Heart right ventricle (tissue), 16 donors: ENCODE measurements at regions of chr2 and their contacts with region 1.

Region 1: GRCh38 chr2:13006829-13007717 is 290.3 kb downstream of the TRIB2 start:
- DNase-seq: peak; percentile 25 to 79
- ATAC-seq: peak; percentile 91 to 95 (median 92)
- H3K4me3 ChIP-seq: peak overlapping the region in 7 of 10 donors; percentile 4 to 39 (median 34)
- H3K27ac ChIP-seq: peak overlapping the region in 9 of 10 donors; percentile 11 to 66 (median 42)
- H3K4me1 ChIP-seq: peaks cover 2 to 38% (median 21%) of the 10 kb centered on the region in 9 donors
- H3K27me3 ChIP-seq: no peaks in the 10 kb centered on the region
- CTCF ChIP-seq: peak; percentile 77 to 95 (median 90)

Region 2: DNA sequence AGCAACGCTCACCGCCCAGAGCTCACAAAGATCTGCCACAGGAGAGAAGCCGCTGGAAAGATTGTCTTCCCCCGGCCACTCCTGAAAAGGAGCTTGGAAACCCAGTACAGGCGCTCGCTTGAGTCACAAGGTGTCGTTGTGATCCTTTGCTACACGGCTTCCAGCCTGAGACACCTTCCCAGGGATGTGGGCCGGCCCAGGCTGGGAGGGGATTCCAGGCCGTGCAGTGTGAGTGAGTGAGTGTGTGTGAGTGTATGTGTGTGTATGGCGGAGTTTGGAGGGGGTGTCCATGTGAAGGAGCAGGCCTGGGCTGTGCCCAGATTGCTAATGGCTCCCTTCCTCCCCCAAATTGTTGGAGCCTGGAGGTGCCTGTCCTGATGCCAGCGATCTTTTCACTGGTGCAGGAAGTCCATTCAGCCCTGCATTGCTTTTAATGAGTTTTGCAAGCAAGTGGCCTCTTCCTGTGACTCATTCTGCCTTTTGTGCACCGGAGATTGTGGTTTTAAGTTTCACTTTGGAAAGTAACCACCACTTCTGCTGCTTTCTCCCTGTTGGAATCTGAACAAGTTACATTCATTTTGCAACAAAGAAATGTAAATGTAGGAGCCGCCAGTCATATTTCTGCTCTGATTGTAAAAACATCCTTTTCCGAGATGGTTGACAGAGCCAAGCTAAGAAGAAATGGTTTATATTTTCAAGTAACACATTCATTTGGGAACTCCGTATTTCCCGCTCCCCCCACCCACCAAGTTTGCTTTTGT is 1176.9 kb before region 1 on chr2:
- intact Hi-C with region 1: loop called (anchors 2 to 10 kb)
- DNase-seq: peak; percentile 51 to 69
- ATAC-seq: peak; percentile 78 to 93 (median 89)
- H3K4me3 ChIP-seq: peak overlapping the region in 7 of 10 donors; percentile 25 to 45 (median 29)
- H3K27ac ChIP-seq: peak overlapping the region; percentile 21 to 90 (median 75)
- H3K4me1 ChIP-seq: peaks cover 8 to 47% (median 29%) of the 10 kb centered on the region in 9 donors
- H3K27me3 ChIP-seq: no peaks in the 10 kb centered on the region
- CTCF ChIP-seq: peak in 6 of 9 donors; percentile 20 to 58 (median 44)

Region 3: DNA sequence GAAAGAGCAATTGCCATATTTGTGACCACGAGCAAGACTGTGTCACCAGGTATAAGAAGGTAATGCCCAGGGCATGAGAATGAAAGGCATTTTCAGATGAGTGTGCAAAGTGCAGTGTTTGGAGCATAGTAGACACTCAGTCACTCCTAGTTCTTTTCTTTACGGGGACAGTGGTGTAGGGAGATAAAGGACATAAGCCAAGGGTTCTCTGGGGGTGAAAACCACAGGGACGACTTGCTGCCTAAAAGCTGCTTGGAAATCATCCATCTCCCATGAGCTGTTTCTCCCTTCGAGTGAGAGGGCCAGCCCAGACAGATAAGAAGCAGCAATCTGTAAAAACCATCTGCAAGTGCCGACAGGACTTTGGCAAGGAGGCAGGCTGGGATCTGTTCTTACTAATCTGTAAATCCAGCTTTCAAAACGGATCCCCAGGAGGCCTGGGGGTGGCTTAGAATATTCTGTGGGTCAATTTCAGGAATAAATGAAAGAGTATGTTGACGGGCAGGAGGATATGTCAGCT is 1039.1 kb before region 1 on chr2:
- intact Hi-C with region 1: loop called in 1 of 10 experiments (anchors 10 kb)
- DNase-seq: peak; percentile 59 to 60
- ATAC-seq: peak; percentile 61 to 94 (median 86)
- H3K4me3 ChIP-seq: no peak overlapping the region
- H3K27ac ChIP-seq: no peak overlapping the region
- H3K4me1 ChIP-seq: peaks cover 0 to 20% (median 9%) of the 10 kb centered on the region in 9 donors
- H3K27me3 ChIP-seq: no peaks in the 10 kb centered on the region
- CTCF ChIP-seq: no peak

Region 4: GRCh38 chr2:12416600-12416999 is 590.5 kb before region 1 on chr2:
- intact Hi-C with region 1: loop called in 3 of 10 experiments (anchors 5 to 10 kb)
- DNase-seq: peak; percentile 40 to 61
- ATAC-seq: peak in 5 of 8 donors; percentile 52 to 65 (median 57)
- H3K4me3 ChIP-seq: no peak overlapping the region
- H3K27ac ChIP-seq: no peak overlapping the region
- H3K4me1 ChIP-seq: peaks cover 0 to 19% (median 0%) of the 10 kb centered on the region in 9 donors
- H3K27me3 ChIP-seq: no peaks in the 10 kb centered on the region
- CTCF ChIP-seq: peak; percentile 24 to 71 (median 59)

Region 5: GRCh38 chr2:12728221-12728777 is 278.8 kb before region 1 on chr2:
- intact Hi-C with region 1: loop called in 2 of 10 experiments (anchors 5 to 10 kb)
- DNase-seq: no peak
- ATAC-seq: no peak
- H3K4me3 ChIP-seq: peak overlapping the region in 1 of 10 donors; percentile 5
- H3K27ac ChIP-seq: peak overlapping the region in 5 of 10 donors; percentile 2 to 99 (median 36)
- H3K4me1 ChIP-seq: peaks cover 28 to 100% (median 95%) of the 10 kb centered on the region in 9 donors
- H3K27me3 ChIP-seq: no peaks in the 10 kb centered on the region
- CTCF ChIP-seq: no peak

Region 6: DNA sequence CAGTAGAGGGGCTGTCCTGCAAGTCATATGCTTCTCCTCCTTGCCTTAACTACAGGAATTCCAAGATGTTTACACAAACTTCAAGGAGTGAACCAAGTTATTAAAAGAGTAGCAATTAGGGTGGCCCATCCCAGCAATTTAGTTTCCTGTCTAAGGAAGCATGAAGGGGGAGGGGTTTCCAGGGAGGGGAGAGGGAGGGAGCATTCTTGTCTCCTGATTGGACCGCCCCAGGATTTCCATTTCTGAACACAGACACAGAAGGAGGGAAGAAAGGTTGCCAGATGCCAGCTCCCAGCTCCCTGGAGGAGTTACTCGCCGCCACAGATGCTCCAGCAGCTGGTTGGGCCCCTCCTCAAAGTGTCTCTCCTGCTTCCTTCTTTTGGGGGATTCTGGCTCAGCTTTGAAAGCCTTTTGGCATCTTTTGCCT is 182.7 kb before region 1 on chr2:
- intact Hi-C with region 1: loop called in 2 of 10 experiments (anchors 10 kb)
- DNase-seq: peak; percentile 35 to 78
- ATAC-seq: peak; percentile 65 to 86 (median 76)
- H3K4me3 ChIP-seq: peak overlapping the region in 1 of 10 donors; percentile 3
- H3K27ac ChIP-seq: peak overlapping the region; percentile 55 to 96 (median 90)
- H3K4me1 ChIP-seq: peaks cover 12 to 50% (median 41%) of the 10 kb centered on the region in 9 donors
- H3K27me3 ChIP-seq: no peaks in the 10 kb centered on the region
- CTCF ChIP-seq: no peak